Prostate gland (tissue), 2 donors: ENCODE measurements at regions of chr4 and their contacts with region 1.

Region 1: GRCh38 chr4:182143822-182144625 is 99.2 kb upstream of the TENM3 start:
- DNase-seq: no peak
- H3K4me3 ChIP-seq: peak overlapping the region; percentile 47 to 51
- H3K27ac ChIP-seq: no peak overlapping the region
- H3K4me1 ChIP-seq: peaks cover 5% of the 10 kb centered on the region
- H3K27me3 ChIP-seq: peaks cover 2% of the 10 kb centered on the region
- CTCF ChIP-seq: no peak
- POLR2A ChIP-seq: no peak

Region 2: DNA sequence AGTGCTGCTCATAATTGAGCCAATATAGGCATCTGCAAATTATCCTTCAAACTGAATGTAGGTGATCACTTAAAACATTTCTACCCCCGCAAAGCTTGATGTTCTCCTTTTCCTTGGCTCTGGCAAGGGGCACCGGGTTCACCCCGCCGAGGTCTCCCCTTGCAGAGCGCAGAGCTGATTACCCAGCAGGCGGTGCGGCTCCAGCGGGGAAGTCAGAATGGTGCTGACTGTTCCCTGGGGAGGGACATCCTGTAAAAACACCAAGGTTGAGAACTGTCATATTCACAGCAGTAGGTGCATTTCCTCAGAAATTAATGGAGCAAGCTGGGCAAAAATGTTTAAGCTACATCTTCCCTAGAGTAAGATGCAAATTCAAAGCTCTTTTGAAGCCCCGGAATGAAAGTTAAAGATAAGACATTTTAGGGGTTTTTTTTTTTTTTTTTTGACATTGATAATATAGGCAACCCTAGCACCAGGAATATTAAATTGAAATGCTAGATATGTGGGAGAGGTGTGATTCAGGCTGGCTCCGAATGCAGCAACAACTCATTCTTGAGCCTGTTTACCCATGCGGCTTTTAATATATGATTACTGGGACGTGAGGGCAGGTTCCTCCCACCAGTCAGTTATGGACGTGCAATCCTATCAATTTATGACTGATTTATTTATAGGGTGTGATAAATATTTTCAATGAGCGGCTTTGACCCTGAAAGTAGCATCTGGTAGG is 668.1 kb before region 1 on chr4:
- intact Hi-C with region 1: no loop called
- DNase-seq: no peak
- H3K4me3 ChIP-seq: no peak overlapping the region
- H3K27ac ChIP-seq: no peak overlapping the region
- H3K4me1 ChIP-seq: no peaks in the 10 kb centered on the region
- H3K27me3 ChIP-seq: no peaks in the 10 kb centered on the region
- CTCF ChIP-seq: no peak
- POLR2A ChIP-seq: no peak

Region 3: GRCh38 chr4:181821039-181822004 is 322.7 kb before region 1 on chr4:
- intact Hi-C with region 1: no loop called
- DNase-seq: no peak
- H3K4me3 ChIP-seq: no peak overlapping the region
- H3K27ac ChIP-seq: no peak overlapping the region
- H3K4me1 ChIP-seq: no peaks in the 10 kb centered on the region
- H3K27me3 ChIP-seq: no peaks in the 10 kb centered on the region
- CTCF ChIP-seq: no peak
- POLR2A ChIP-seq: no peak

Region 4: GRCh38 chr4:181952478-181952877 is 191.5 kb before region 1 on chr4:
- intact Hi-C with region 1: no loop called
- DNase-seq: peak; percentile 54
- H3K4me3 ChIP-seq: no peak overlapping the region
- H3K27ac ChIP-seq: no peak overlapping the region
- H3K4me1 ChIP-seq: peaks cover 4% of the 10 kb centered on the region
- H3K27me3 ChIP-seq: no peaks in the 10 kb centered on the region
- CTCF ChIP-seq: no peak
- POLR2A ChIP-seq: no peak

Region 5: GRCh38 chr4:182019148-182019652 is 124.8 kb before region 1 on chr4:
- intact Hi-C with region 1: no loop called
- DNase-seq: no peak
- H3K4me3 ChIP-seq: no peak overlapping the region
- H3K27ac ChIP-seq: no peak overlapping the region
- H3K4me1 ChIP-seq: no peaks in the 10 kb centered on the region
- H3K27me3 ChIP-seq: no peaks in the 10 kb centered on the region
- CTCF ChIP-seq: no peak
- POLR2A ChIP-seq: no peak

Region 6: DNA sequence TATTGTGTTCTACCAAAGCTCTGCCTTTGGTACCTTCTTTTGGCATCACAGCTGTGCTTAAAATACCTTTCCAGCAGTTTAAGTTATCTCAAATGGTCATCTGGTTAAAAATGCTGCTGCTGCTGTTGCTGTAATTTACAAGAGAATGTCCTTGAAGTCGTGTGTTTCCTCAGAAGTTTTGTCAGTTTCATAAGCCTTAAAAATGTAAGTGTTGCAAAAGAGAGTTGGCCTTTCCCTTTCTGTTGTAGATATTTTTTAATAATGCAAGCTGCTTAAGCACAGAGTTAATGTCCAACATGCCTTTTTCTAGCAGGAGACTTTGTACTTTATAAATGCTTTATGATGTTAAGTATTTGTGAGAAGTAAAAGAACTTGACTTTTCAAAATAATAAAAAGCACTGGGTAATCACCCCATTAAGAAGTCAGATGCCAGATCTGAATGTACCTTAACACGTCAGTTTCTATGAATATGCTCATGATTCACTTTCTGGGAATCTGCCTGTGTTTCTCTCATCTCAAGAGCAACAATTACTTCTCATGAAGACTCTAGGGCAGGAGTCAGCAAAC is 63.9 kb after region 1 on chr4:
- intact Hi-C with region 1: loop called (anchors 5 kb)
- DNase-seq: no peak
- H3K4me3 ChIP-seq: no peak overlapping the region
- H3K27ac ChIP-seq: peak overlapping the region in 1 of 2 donors; percentile 2
- H3K4me1 ChIP-seq: no peaks in the 10 kb centered on the region
- H3K27me3 ChIP-seq: no peaks in the 10 kb centered on the region
- CTCF ChIP-seq: no peak
- POLR2A ChIP-seq: no peak

Region 7: GRCh38 chr4:182246401-182247205 is 102.6 kb after region 1 on chr4:
- intact Hi-C with region 1: loop called (anchors 5 kb)
- DNase-seq: peak; percentile 51
- H3K4me3 ChIP-seq: no peak overlapping the region
- H3K27ac ChIP-seq: no peak overlapping the region
- H3K4me1 ChIP-seq: no peaks in the 10 kb centered on the region
- H3K27me3 ChIP-seq: no peaks in the 10 kb centered on the region
- CTCF ChIP-seq: no peak
- POLR2A ChIP-seq: no peak

Region 8: GRCh38 chr4:182448281-182449151 is 304.5 kb after region 1 on chr4:
- intact Hi-C with region 1: loop called (anchors 5 kb)
- DNase-seq: peak; percentile 91
- H3K4me3 ChIP-seq: peak overlapping the region; percentile 64 to 69
- H3K27ac ChIP-seq: peak overlapping the region; percentile 76
- H3K4me1 ChIP-seq: peaks cover 3% of the 10 kb centered on the region
- H3K27me3 ChIP-seq: no peaks in the 10 kb centered on the region
- CTCF ChIP-seq: no peak
- POLR2A ChIP-seq: no peak